Esophagus squamous epithelium (tissue), 5 donors: ENCODE measurements at regions of chr17 and their contacts with region 1.

Region 1: GRCh38 chr17:17812211-17813057 is 24.4 kb downstream of the SREBF1 start:
- DNase-seq: no peak
- H3K4me3 ChIP-seq: no peak overlapping the region
- H3K27ac ChIP-seq: peak overlapping the region; percentile 2 to 80 (median 56)
- H3K4me1 ChIP-seq: peaks cover 32 to 96% (median 57%) of the 10 kb centered on the region in 3 donors
- H3K27me3 ChIP-seq: no peaks in the 10 kb centered on the region
- CTCF ChIP-seq: peak; percentile 99 to 100 (median 99)
- POLR2A ChIP-seq: no peak

Region 2: DNA sequence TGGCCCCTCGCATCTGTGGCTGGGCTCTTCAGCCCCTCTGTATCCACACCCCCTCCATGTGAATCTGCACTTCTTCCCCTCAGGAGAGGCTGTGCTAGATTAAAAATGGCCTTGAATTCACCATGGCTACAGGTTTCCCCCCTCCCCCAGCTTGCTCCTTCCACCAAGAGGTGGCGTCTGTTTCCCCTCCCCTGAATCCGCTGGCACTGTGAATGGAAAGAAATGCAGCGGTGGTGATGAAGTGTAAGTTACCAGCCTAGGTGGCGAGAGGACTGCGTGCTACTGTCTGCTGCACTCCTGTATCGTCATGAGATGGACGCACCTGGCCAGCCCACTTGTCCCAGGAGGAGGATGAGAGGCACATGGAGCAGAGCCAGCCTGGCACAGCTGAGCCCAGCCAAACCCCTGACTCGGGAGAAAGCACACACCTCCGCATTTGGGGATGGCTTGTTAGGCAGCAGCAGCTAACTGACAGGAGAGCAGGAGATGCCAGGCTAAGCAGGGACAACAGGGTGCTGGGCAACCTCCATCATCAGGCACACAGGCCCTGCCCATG is 866.7 kb before region 1 on chr17:
- intact Hi-C with region 1: no loop called
- DNase-seq: no peak
- H3K4me3 ChIP-seq: no peak overlapping the region
- H3K27ac ChIP-seq: no peak overlapping the region
- H3K4me1 ChIP-seq: no peaks in the 10 kb centered on the region
- H3K27me3 ChIP-seq: peaks cover 0 to 35% (median 0%) of the 10 kb centered on the region in 4 donors
- CTCF ChIP-seq: no peak
- POLR2A ChIP-seq: no peak

Region 3: DNA sequence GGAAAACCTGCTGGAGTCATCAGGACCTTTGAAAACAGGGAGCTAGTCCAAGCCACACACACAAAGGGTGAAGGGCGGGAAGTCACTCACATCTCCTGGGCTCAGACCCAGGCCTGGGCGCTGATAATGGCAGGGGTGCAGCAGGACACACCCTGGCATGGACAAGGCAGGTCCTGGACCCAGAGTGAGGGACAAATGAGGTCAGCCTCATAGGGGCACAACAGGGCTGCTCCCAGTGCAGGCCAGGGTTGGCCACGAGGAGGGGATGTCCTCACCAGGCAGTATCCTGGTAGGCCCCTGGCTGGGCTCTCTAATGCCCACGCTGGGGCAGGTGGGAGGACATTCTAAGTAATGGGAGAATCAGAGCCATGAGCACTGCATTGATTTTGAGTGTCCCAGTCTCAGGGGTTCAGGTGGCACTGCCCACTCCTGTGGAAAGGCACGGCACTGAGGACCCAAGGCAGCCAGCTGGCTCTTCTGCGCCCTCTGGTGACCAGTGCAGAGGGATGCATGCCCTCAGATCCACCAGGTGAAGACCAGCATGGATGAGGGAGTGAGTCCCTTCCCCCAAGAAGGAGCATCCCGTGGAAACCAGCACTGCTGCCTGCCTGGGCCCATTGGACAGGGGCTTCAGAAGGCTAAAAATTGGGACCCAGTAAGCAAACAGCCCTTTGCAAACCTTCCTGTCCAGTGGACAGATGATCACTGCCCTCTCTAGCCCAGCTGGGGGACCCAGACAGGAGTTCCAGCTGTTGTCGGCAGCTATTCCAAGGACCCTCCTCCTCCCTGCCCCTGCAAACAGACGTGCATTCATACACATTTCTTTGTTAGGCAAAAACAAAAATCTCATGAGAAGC is 47.7 kb after region 1 on chr17:
- intact Hi-C with region 1: loop called (anchors 2 kb)
- DNase-seq: no peak
- H3K4me3 ChIP-seq: no peak overlapping the region
- H3K27ac ChIP-seq: no peak overlapping the region
- H3K4me1 ChIP-seq: peaks cover 5 to 28% (median 13%) of the 10 kb centered on the region in 3 donors
- H3K27me3 ChIP-seq: no peaks in the 10 kb centered on the region
- CTCF ChIP-seq: peak; percentile 92 to 96 (median 94)
- POLR2A ChIP-seq: no peak

Region 4: GRCh38 chr17:18038861-18039534 is 226.6 kb after region 1 on chr17 and contains the starts of genes ATPAF2 and GID4:
- intact Hi-C with region 1: loop called (anchors 10 kb)
- DNase-seq: peak; percentile 97
- H3K4me3 ChIP-seq: peak within 1 kb of the TSS; percentile 75 to 99 (median 82)
- H3K27ac ChIP-seq: peak within 1 kb of the TSS; percentile 88 to 92 (median 90)
- H3K4me1 ChIP-seq: peaks cover 17 to 54% (median 34%) of the 10 kb centered on the region in 3 donors
- H3K27me3 ChIP-seq: no peaks in the 10 kb centered on the region
- CTCF ChIP-seq: peak in 1 of 6 experiments; percentile 10
- POLR2A ChIP-seq: peak in 3 of 4 donors; percentile 20 to 50 (median 42)
- total RNA-seq, gene ATPAF2: 15.8 to 26.9 (median 20.7) TPM
- total RNA-seq, gene GID4: 7.5 to 18.1 (median 11.6) TPM